Transverse colon (tissue), 4 donors: ENCODE measurements at regions of chr5 and their contacts with region 1.

Region 1: DNA sequence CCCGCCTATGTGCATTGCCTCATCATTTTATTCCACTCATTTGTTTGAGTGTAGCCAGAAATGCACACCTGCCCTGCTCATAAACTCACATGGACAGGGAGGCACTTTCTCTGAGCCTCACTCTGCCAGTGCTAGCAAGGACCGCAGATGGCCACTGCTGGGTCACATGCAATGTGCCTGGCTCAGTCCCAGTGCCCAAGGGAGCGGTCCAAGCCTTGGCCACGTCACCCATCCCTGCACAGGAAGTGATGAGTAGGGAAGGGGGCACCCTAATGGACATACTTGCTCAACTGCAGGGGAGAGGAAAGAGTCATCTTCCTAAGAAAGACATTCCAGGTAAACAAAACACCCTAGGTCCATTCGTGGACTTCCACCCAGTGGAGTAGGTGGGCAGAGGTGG is 630.9 kb downstream of the IRX1 start:
- DNase-seq: no peak
- H3K4me3 ChIP-seq: no peak overlapping the region
- H3K27ac ChIP-seq: no peak overlapping the region
- H3K4me1 ChIP-seq: no peaks in the 10 kb centered on the region
- H3K27me3 ChIP-seq: no peaks in the 10 kb centered on the region
- CTCF ChIP-seq: no peak
- EP300 ChIP-seq: no peak
- POLR2A ChIP-seq: no peak

Region 2: DNA sequence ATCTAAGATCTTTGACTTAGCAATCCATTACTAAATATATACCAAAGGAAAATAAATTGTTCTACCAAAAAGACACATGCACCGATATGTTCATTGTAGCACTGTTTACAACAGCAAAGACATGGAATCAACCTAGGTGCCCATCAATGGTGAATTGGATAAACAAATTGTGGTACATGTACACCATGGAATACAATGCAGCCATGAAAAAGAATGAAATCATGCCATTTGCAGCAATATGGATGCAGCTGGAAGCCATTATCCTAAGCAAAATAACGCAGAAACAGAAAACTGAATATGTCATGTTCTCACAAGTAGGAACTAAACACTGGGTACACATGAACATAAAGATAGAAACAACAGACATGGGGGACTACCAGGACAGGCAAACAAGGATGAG is 41.4 kb before region 1 on chr5:
- in situ Hi-C with region 1: no loop called
- intact Hi-C with region 1: loop called (anchors 2 kb)
- DNase-seq: no peak
- H3K4me3 ChIP-seq: no peak overlapping the region
- H3K27ac ChIP-seq: no peak overlapping the region
- H3K4me1 ChIP-seq: no peaks in the 10 kb centered on the region
- H3K27me3 ChIP-seq: no peaks in the 10 kb centered on the region
- CTCF ChIP-seq: no peak
- EP300 ChIP-seq: no peak
- POLR2A ChIP-seq: no peak